ENCODE measurements at regions of chr7 and their contacts with region 1.

Region 1: DNA sequence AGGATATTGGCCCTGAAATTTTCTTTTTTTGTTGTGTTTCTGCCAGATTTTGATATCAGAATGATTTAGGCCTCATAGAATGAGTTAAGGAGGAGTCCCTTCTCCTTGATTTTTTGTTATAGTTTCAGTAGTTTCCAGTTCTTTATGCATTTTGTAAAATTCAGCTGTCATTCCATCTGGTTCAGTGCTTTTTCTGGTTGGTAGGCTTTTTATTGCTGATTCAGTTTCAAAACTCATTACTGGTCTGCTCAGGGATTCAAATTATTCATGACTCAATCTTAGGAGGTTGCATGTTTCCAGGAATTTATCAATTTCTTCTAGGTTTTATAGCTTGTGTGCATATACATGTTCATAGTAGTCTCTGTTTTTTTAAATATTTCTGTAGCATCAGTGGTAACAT is 10.1 kb upstream of the TMEM196 start:
- DNase-seq: no peak
- ATAC-seq: no peak
- H3K4me3 ChIP-seq: no peak overlapping the region
- H3K4me3 Mint-ChIP-seq: no peak overlapping the region
- H3K27ac ChIP-seq: no peak overlapping the region
- H3K27ac Mint-ChIP-seq: no peak overlapping the region
- H3K4me1 ChIP-seq: no peaks in the 10 kb centered on the region
- H3K4me1 Mint-ChIP-seq: no peaks in the 10 kb centered on the region
- H3K27me3 ChIP-seq: no peaks in the 10 kb centered on the region
- H3K27me3 Mint-ChIP-seq: peaks cover 3% of the 10 kb centered on the region
- CTCF ChIP-seq: no peak

Region 2: GRCh38 chr7:19677180-19677579 is 106.4 kb before region 1 on chr7:
- CTCF ChIA-PET with region 1: no interaction called
- POLR2A ChIA-PET with region 1: no interaction called
- intact Hi-C with region 1: no loop called
- DNase-seq: no peak
- ATAC-seq: no peak
- H3K4me3 ChIP-seq: no peak overlapping the region
- H3K4me3 Mint-ChIP-seq: no peak overlapping the region
- H3K27ac ChIP-seq: no peak overlapping the region
- H3K27ac Mint-ChIP-seq: no peak overlapping the region
- H3K4me1 ChIP-seq: no peaks in the 10 kb centered on the region
- H3K4me1 Mint-ChIP-seq: no peaks in the 10 kb centered on the region
- H3K27me3 ChIP-seq: no peaks in the 10 kb centered on the region
- H3K27me3 Mint-ChIP-seq: no peaks in the 10 kb centered on the region
- CTCF ChIP-seq: no peak

Region 3: DNA sequence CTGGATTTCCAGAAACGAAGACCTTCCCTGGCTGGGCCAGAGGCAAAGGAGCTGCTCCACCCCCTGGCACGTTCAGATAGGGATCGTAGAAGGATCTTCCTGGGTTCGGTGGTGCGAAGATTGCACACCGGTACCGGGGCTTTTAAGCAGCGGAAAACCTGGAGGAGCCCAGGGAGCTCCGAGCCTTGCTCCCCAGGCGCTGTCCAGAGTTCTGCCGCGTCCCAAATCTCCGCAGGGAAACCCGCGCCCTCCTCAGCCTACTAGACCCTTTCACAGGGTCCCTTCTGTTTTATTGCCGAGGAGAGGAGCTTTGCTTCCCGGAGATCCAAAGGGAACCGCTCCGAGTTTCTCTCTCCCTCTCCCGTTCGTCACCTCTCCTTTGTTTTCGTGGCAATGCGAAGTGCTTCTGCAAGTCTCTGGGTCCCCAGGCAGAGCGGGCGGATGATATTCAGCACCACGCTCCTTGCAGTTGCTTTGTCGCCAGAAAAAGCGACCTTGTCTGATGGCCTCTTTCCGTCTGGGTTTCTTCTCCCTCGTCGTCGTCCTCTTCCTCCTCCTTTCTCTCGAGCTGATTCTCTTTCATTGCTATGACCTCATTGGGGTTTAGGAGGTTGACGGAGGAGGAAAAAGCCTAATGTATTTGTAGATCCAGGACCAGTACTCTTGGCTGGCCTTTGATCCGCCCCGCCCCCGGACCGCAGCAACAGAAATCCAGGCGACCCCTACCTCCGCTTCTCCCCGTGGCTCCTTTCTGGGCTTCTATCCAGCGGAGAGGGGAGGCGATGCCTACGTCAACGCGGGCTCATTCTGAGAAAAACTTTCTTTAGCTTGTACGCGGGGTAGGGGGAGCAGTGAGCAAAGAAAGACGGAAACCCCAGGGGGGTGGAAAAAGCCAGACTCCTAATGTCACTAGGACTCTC is 10.4 kb before region 1 on chr7 and contains the start of gene TMEM196:
- CTCF ChIA-PET with region 1: no interaction called
- POLR2A ChIA-PET with region 1: no interaction called
- intact Hi-C with region 1: no loop called
- DNase-seq: peak in 1 of 9 experiments; percentile 3
- ATAC-seq: no peak
- H3K4me3 ChIP-seq: no peak within 1 kb of the TSS
- H3K4me3 Mint-ChIP-seq: peak within 1 kb of the TSS; percentile 37
- H3K27ac ChIP-seq: no peak within 1 kb of the TSS
- H3K27ac Mint-ChIP-seq: no peak within 1 kb of the TSS
- H3K4me1 ChIP-seq: no peaks in the 10 kb centered on the region
- H3K4me1 Mint-ChIP-seq: peaks cover 8% of the 10 kb centered on the region
- H3K27me3 ChIP-seq: peaks cover 3 to 17% of the 10 kb centered on the region in 2 experiments
- H3K27me3 Mint-ChIP-seq: peaks cover 37% of the 10 kb centered on the region
- CTCF ChIP-seq: no peak
- total RNA-seq, gene TMEM196: not detected

Region 4: DNA sequence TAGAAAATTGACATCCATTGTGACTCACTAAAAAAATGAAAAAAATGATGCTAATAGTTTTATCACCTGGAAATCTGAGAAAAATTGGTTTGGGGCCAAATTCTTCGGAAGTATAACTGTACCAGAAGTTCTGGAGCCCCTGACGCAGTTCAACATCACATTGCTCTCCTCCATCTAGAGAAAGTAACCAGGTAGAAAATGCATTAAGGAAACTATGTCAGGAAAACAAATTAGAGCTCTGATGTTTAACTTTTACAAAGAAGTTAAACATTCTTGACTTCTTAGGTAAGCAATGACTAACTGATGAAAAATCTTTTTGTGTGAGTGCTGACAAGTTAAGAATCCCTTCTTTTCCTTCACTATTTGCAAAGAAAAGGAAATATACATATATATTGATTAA is 51.0 kb after region 1 on chr7:
- CTCF ChIA-PET with region 1: no interaction called
- POLR2A ChIA-PET with region 1: no interaction called
- intact Hi-C with region 1: loop called in 1 of 2 experiments (anchors 5 kb)
- DNase-seq: no peak
- ATAC-seq: no peak
- H3K4me3 ChIP-seq: no peak overlapping the region
- H3K4me3 Mint-ChIP-seq: no peak overlapping the region
- H3K27ac ChIP-seq: no peak overlapping the region
- H3K27ac Mint-ChIP-seq: no peak overlapping the region
- H3K4me1 ChIP-seq: no peaks in the 10 kb centered on the region
- H3K4me1 Mint-ChIP-seq: no peaks in the 10 kb centered on the region
- H3K27me3 ChIP-seq: no peaks in the 10 kb centered on the region
- H3K27me3 Mint-ChIP-seq: no peaks in the 10 kb centered on the region
- CTCF ChIP-seq: no peak

Measured in CD8-positive, alpha-beta T cell (primary cell).